Posterior cingulate gyrus (tissue), 11 donors: ENCODE measurements at regions of chr17 and their contacts with region 1.

Region 1: DNA sequence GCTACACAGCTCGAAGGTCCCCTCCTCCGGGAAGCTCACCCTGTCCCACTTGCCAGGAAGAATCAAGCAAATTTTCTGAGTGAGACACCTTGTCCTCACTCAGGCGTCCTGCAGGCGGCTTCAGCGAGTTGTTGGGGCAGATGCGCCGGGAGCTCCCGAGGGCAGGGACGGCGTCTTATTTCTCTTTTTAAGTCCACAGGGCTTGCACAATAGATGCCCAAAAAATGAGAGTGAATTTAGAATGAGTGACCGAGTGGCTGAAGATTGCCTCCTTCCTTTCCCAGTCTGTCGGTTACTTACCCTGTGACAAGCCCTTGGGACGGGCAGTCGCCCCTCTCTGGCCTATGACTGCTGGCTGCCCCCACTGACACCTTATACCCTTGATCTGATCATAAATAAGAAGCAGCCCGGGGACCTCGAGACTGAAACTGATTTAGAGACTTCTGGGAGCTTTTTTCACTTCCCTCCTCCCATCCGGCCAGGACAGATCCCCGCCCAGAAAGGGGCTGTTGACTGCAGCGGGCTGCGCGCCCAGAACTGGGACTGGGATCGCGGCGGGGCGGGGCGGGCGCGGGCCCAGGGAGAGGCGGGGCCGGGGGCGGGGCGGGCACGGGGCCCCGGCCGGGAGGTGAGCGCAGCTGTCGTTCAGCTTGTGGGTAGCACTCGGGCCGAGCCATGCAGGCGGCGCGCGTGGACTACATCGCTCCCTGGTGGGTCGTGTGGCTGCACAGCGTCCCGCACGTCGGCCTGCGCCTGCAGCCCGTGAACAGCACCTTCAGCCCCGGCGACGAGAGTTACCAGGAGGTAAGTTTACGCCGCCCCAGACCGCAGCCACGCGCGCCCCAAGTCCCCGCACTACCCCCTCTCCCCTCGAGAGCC is at the start of gene TTYH2:
- DNase-seq: peak; percentile 81 to 98 (median 86)

Region 2: DNA sequence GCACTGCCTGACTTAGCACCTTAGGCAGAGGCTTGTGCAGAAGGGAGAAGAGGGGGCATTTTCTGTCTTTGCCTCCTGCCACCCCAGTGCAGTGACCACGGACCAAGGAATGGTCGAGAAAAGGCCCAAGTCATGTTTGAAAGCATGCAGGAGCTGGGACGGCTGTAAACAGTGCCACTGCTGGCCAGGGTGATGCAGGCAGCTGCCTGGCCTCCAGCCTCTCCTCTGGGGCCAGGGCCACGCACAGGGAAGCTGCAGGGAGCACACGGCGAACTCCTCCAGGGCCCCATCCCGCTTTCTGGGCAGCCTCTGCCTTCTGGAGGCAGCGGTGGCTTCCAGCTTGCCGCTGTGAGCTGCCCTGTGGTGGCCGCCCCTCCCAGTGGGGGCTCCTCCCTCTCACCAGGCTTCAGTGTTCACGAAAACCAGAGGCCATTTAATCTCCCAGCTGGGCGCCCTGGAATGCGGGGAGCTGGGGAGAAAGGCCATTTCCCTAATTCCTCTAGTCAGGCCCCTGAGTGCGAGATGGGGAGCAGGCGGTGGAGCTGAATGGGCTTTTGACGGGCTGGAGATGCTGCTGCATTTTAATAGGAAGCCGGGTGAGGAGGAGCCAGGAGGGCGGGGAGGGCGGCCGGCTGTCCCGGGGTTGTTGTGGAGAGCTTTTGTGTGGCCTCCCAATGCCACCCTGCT is 32.1 kb after region 1 on chr17:
- intact Hi-C with region 1: loop called (anchors 1 kb)
- DNase-seq: peak; percentile 83 to 99 (median 89)

Region 3: GRCh38 chr17:74296548-74296936 is 83.4 kb after region 1 on chr17:
- intact Hi-C with region 1: loop called (anchors 1 kb)
- DNase-seq: peak; percentile 44 to 96 (median 77)

Region 4: GRCh38 chr17:74361230-74362068 is 148.3 kb after region 1 on chr17 and contains the start of gene BTBD17:
- intact Hi-C with region 1: loop called (anchors 2 kb)
- DNase-seq: peak; percentile 47 to 96 (median 76)

Region 5: DNA sequence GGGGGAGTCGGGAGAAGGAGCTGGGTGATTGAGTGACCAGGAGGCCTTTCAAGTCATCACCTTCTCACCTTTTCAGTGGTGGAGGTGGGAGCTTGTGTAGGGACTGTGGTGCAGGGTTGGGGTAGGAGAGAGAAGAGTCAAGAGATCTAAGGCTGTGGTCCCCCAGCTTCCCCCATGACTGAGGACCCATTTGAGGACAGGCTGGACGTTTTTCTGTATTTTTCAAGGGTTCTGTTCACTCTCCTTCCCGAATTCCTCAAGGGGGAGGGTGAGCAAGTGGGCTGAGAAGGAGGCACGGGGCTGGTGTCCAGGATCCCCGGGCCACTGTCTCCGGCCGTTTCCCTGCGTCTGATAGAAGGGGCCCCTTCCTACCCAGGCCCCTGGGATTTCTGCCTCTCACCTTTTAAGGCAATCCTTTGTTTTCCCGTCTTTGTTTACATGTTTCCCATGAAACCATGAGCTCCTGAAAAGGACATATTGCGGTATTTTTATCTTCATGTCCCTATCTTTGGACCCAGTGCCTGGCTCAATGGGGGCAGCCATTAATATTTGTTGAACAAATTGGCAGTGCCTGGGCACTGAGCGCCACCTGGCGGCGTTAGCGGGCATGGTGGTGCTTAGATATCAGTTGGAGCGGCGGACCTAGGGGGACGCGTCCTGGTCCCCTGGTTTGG is 244.1 kb after region 1 on chr17:
- intact Hi-C with region 1: loop called (anchors 10 kb)
- DNase-seq: peak; percentile 52 to 97 (median 84)